ENCODE measurements at regions of chr1 and their contacts with region 1.

Region 1: DNA sequence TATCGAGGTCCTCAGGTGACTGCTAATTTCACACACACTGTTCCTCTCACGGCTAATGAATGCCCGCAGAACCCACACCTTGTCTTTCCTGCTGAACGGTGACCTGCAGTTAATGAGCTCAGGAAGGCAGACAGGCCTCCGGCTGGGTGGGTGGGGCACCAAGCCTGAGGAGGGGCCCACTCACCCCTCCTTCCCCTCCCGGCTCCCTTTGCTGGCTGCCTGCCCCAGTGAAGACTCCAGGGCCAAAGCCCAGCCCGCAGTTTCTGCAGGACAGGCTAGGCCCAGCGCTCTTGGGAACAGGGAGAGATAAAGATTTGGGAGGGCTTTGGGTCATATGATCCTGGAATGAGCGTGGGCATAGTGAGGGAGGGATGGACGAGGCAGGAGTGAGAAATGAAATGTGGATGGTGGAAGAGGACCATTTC is 26.4 kb downstream of the FOXO6 start:
- DNase-seq: peak; percentile 92

Region 2: DNA sequence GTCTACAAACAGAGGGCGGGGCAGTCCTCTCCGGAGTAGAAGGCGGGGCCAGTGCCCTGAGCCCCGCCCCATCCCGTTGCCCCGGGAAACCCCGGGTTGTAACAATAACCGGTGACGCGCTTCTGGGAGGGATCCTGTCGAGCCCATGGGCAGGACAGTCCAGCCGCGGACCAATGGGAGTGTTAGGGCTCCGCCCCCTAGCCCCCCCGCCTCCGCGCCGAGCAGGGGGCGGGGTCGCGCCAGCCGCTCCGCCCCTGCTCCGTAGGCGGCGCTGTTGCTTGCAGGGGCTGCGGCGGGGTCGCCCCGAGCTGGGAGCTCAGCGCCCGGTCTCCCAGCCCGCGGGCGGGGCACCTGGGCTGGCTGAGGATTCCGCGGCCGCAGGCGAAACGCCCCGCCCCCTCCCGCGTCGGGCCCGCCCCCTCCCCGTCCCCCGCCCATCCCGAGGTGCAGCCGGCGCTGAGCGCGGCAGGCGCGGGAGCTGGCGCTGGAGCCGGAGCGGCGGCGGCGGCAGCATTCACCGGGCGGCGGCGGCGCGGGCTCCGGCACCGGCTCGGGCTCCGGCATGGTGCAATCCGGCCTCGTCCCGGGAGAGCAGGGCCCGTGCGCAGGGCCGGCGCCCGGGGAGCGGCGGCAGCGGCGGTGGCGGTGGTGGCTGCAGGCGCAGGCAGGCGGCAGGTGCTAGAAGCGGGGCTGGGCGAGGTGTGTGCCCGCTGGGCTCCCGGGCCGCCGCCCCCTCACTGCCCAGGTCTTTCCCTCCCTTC is 26.5 kb before region 1 on chr1 and contains the start of gene FOXO6:
- intact Hi-C with region 1: loop called (anchors 2 kb)
- DNase-seq: peak; percentile 99
- total RNA-seq, gene FOXO6: 2.0 TPM

Region 3: GRCh38 chr1:41564738-41565475 is 177.2 kb after region 1 on chr1:
- intact Hi-C with region 1: no loop called
- DNase-seq: peak; percentile 19